MCF 10A (cell line): ENCODE measurements at regions of chr17 and their contacts with region 1.

Region 1: DNA sequence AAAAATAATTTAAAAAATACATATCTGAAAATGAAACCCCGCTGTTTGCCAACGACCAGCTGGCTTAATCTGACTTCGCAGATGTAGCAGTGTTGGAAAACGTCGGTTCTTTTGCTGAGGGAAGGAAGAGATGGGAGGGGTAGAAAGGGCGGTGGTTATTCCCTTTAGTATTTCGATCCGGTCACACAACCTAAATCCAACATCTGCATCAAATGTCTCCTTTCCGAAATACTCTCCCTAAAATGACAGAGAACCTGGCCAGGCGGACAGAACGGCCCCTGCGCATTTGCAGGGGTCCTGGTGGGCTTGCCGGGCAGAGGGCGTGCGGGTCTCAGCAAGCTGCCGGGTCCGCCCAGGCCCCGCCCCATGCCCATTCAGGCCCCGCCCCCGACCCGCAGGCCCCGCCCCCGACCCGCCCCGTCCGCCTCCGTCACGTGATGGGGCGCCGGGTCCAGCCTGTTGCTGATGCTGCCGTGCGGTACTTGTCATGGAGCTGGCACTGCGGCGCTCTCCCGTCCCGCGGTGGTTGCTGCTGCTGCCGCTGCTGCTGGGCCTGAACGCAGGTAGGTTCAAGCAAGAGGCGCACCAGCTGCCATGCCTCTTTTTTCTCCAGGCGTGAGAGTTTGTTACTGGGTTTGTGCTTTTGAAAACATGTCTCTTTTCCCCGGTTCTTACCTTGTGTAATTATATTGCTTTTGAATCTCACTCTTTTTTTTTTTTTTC is at the start of gene SCPEP1:
- DNase-seq: peak; percentile 77
- H3K4me3 Mint-ChIP-seq: peak within 1 kb of the TSS; percentile 73
- H3K27ac Mint-ChIP-seq: peak within 1 kb of the TSS; percentile 34
- H3K4me1 Mint-ChIP-seq: peaks cover 31% of the 10 kb centered on the region
- H3K27me3 Mint-ChIP-seq: no peaks in the 10 kb centered on the region
- CTCF ChIP-seq: no peak
- total RNA-seq, gene SCPEP1: 39.2 and 51.4 TPM in 2 replicates

Region 2: DNA sequence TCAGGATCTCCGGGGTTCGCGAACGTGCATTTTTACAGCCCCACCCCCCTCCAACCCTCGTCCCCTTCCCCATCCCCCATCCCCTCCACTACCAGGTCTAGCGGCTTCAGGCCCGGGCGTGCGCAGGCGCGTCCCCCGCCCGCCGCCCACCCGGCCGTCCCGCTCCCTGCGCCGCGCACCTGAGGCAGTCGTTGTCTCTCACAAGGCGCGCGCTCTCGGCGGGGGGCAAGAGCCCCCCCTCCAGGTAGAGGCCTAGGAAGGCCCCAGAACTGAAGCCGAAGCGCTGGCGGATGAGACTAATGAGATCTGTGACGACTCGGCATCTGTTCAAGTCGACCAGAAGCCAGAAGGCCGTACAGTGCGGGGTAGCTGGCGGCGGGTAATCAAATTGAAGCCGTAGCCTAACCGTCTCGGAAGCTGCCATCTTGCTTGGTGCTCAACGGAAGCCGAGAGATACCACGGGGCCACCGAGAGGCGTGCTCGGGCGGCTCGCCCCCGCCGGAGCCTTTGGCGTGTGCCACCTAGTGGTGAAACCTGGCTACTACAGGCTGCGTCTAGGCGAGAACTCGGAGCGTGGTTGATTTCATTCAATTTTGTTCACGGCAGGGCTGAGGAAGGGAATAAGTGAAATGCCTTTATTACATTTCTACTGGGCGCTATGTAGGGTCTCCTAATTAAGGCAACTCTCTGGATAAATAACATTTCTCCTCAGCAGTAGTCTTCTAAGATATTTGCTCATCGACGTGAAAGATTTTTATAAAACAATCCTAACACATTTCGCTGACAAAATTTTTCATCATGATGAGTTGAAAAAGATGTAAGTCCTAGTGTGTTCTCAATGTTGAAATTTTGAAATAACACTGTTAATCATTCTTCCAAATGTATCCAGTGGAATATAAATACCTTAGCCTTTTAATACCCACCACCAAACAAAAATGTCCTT is 17.0 kb before region 1 on chr17 and contains the start of gene COIL:
- CTCF ChIA-PET with region 1: interaction called, 5 read pairs
- POLR2A ChIA-PET with region 1: interaction called, 30 read pairs
- intact Hi-C with region 1: no loop called
- DNase-seq: peak; percentile 89
- H3K4me3 Mint-ChIP-seq: peak within 1 kb of the TSS; percentile 73
- H3K27ac Mint-ChIP-seq: peak within 1 kb of the TSS; percentile 46
- H3K4me1 Mint-ChIP-seq: peaks cover 5% of the 10 kb centered on the region
- H3K27me3 Mint-ChIP-seq: no peaks in the 10 kb centered on the region
- CTCF ChIP-seq: peak; percentile 94
- total RNA-seq, gene COIL: 15.4 and 17.2 TPM in 2 replicates

Region 3: GRCh38 chr17:56966338-56966737 is 11.5 kb before region 1 on chr17:
- CTCF ChIA-PET with region 1: interaction called, 4 read pairs
- POLR2A ChIA-PET with region 1: interaction called, 30 read pairs
- intact Hi-C with region 1: no loop called
- DNase-seq: no peak
- H3K4me3 Mint-ChIP-seq: no peak overlapping the region
- H3K27ac Mint-ChIP-seq: no peak overlapping the region
- H3K4me1 Mint-ChIP-seq: peaks cover 5% of the 10 kb centered on the region
- H3K27me3 Mint-ChIP-seq: no peaks in the 10 kb centered on the region
- CTCF ChIP-seq: no peak

Region 4: GRCh38 chr17:57009737-57010445 is 32.1 kb after region 1 on chr17:
- CTCF ChIA-PET with region 1: interaction called, 5 read pairs
- POLR2A ChIA-PET with region 1: interaction called, 29 read pairs
- intact Hi-C with region 1: no loop called
- DNase-seq: peak; percentile 68
- H3K4me3 Mint-ChIP-seq: no peak overlapping the region
- H3K27ac Mint-ChIP-seq: no peak overlapping the region
- H3K4me1 Mint-ChIP-seq: peaks cover 6% of the 10 kb centered on the region
- H3K27me3 Mint-ChIP-seq: no peaks in the 10 kb centered on the region
- CTCF ChIP-seq: peak; percentile 76

Region 5: GRCh38 chr17:57033295-57033694 is 55.5 kb after region 1 on chr17:
- CTCF ChIA-PET with region 1: no interaction called
- POLR2A ChIA-PET with region 1: interaction called, 24 read pairs
- intact Hi-C with region 1: no loop called
- DNase-seq: no peak
- H3K4me3 Mint-ChIP-seq: no peak overlapping the region
- H3K27ac Mint-ChIP-seq: no peak overlapping the region
- H3K4me1 Mint-ChIP-seq: peaks cover 12% of the 10 kb centered on the region
- H3K27me3 Mint-ChIP-seq: peaks cover 25% of the 10 kb centered on the region
- CTCF ChIP-seq: no peak